ENCODE measurements at regions of chr11 and their contacts with region 1.

Region 1: GRCh38 chr11:88543902-88544655 is 206.5 kb upstream of the CTSC start:
- DNase-seq: peak; percentile 88
- ATAC-seq: peak; percentile 99
- H3K4me3 Mint-ChIP-seq: no peak overlapping the region
- H3K27ac Mint-ChIP-seq: no peak overlapping the region
- H3K4me1 Mint-ChIP-seq: peaks cover 12% of the 10 kb centered on the region
- H3K27me3 Mint-ChIP-seq: no peaks in the 10 kb centered on the region

Region 2: DNA sequence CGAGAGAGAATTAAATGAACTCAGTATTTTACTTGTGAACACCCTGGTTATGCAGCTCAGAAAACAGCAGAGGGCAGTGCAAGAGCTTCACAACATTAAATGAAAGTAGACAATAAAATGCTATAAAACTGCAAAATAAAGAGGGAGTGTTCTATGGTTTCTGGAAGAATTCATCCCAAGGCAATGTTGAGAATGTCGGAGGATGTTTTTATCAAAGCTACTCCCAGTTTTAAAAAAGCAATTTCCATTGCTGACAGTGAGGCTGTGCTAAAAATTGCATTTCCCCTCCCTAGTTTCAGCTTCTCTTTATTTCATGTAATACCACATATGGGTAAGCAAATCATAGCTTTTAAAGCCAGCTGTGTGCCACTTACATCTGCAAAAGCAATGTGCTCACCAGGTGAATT is 665.7 kb before region 1 on chr11:
- CTCF ChIA-PET with region 1: interaction called, 3 read pairs
- POLR2A ChIA-PET with region 1: no interaction called
- intact Hi-C with region 1: loop called (anchors 5 kb)
- DNase-seq: peak; percentile 17
- ATAC-seq: no peak
- H3K4me3 Mint-ChIP-seq: no peak overlapping the region
- H3K27ac Mint-ChIP-seq: no peak overlapping the region
- H3K4me1 Mint-ChIP-seq: no peaks in the 10 kb centered on the region
- H3K27me3 Mint-ChIP-seq: peaks cover 3% of the 10 kb centered on the region

Region 3: GRCh38 chr11:88103337-88104206 is 440.5 kb before region 1 on chr11:
- CTCF ChIA-PET with region 1: interaction called, 3 read pairs
- POLR2A ChIA-PET with region 1: no interaction called
- intact Hi-C with region 1: loop called (anchors 1 kb)
- DNase-seq: peak; percentile 51
- ATAC-seq: peak; percentile 81
- H3K4me3 Mint-ChIP-seq: no peak overlapping the region
- H3K27ac Mint-ChIP-seq: no peak overlapping the region
- H3K4me1 Mint-ChIP-seq: no peaks in the 10 kb centered on the region
- H3K27me3 Mint-ChIP-seq: peaks cover 2% of the 10 kb centered on the region

Region 4: GRCh38 chr11:88484873-88485621 is 59.0 kb before region 1 on chr11:
- CTCF ChIA-PET with region 1: interaction called, 3 read pairs
- POLR2A ChIA-PET with region 1: no interaction called
- intact Hi-C with region 1: loop called in 1 of 2 experiments (anchors 1 kb)
- DNase-seq: peak; percentile 41
- ATAC-seq: peak; percentile 87
- H3K4me3 Mint-ChIP-seq: no peak overlapping the region
- H3K27ac Mint-ChIP-seq: no peak overlapping the region
- H3K4me1 Mint-ChIP-seq: peaks cover 13% of the 10 kb centered on the region
- H3K27me3 Mint-ChIP-seq: no peaks in the 10 kb centered on the region

Measured in activated CD4-positive, alpha-beta T cell treated with anti-CD3 and anti-CD28 coated beads for 36 hours (primary cell).